ENCODE measurements at regions of chr4 and their contacts with region 1.

Region 1: GRCh38 chr4:108628411-108628810 is 8.0 kb downstream of the RPL34 start:
- DNase-seq: no peak
- H3K4me3 ChIP-seq: no peak overlapping the region
- H3K4me3 Mint-ChIP-seq: no peak overlapping the region
- H3K27ac ChIP-seq: no peak overlapping the region
- H3K27ac Mint-ChIP-seq: peak overlapping the region in 1 of 7 donors; percentile 71
- H3K4me1 ChIP-seq: peaks cover 10% of the 10 kb centered on the region
- H3K4me1 Mint-ChIP-seq: peaks cover 12 to 15% (median 13%) of the 10 kb centered on the region in 4 donors
- H3K27me3 ChIP-seq: no peaks in the 10 kb centered on the region
- H3K27me3 Mint-ChIP-seq: no peaks in the 10 kb centered on the region

Region 2: DNA sequence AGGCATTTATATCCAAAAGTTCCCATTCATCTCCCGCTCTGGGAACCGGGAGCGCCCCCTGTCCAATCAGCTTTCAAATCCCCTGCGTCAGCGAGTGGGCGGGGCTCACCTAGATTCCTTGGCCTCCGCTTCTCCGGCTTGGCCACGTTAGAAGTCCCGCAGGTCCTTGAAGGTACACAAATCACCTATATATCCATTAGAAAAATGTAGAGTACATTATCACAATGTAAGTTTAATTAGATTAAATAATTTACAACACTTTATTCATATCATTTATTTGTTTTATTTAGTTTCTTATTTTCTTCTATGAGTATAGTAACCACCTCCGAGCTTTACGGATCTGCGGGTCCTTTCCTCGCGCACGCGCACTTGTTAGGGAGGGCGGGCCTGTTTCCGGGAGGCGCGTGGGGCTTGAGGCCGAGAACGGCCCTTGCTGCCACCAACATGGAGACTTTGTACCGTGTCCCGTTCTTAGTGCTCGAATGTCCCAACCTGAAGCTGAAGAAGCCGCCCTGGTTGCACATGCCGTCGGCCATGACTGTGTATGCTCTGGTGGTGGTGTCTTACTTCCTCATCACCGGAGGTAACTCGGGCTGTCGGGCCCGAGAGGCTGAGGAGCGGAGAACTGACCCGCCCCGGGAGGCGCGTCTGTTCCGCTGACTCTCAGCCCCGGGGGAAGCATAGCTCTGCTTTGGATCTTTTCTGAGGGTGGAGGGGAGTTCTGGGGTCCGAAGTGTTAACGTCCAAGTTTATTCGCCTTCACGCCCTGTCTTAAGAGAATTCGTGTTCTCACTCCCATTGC is 22.0 kb after region 1 on chr4 and contains the start of gene OSTC:
- CTCF ChIA-PET with region 1: no interaction called
- POLR2A ChIA-PET with region 1: interaction called, 10 read pairs
- intact Hi-C with region 1: no loop called
- DNase-seq: peak; percentile 91 to 95 (median 93)
- H3K4me3 ChIP-seq: peak within 1 kb of the TSS; percentile 77 to 86
- H3K4me3 Mint-ChIP-seq: peak within 1 kb of the TSS; percentile 93 to 99 (median 98)
- H3K27ac ChIP-seq: peak within 1 kb of the TSS; percentile 98
- H3K27ac Mint-ChIP-seq: peak within 1 kb of the TSS; percentile 98 to 99 (median 99)
- H3K4me1 ChIP-seq: peaks cover 37% of the 10 kb centered on the region
- H3K4me1 Mint-ChIP-seq: peaks cover 23 to 50% (median 37%) of the 10 kb centered on the region in 4 donors
- H3K27me3 ChIP-seq: no peaks in the 10 kb centered on the region
- H3K27me3 Mint-ChIP-seq: no peaks in the 10 kb centered on the region
- total RNA-seq, gene OSTC: 67.9 to 72.1 TPM